ENCODE measurements at regions of chr2 and their contacts with region 1.

Region 1: DNA sequence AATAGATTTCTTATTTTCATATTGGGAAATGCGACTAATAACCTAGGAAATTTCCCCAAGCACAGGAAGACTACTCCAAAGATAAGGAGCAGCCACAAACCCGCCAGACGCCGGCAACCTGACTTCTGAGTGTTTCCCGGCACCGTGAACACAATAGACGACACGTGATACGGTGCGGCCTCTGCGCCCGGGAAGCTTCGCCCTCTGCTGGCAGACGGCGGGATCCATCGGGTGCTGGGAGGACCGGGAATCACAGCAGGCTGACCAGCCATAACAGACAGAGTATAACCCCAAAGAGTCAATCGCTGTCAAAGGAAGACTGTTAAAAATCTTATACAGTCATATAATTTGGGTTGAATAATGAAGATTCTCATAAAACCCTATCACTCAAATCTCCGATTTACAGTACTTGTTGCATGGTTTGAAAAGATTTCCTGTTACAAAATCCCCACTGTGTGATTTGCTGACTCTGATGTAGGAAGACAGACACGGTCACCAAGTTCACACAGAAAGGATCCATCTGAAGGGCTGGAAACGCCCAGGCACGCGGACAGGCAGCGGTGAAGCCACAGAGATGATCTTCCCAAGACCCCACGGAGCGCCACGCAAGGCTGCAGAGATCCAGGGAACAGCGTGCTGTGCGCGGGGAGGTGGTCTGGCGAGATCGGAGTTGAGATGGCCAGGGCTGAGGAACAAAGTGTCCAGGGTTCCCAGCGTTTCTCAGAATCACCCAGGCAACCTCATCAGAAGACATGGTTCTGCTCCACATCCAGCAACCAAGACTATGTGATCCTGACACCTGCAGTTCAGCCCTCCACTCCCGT is 73.8 kb downstream of the EIPR1 start:
- DNase-seq: peak; percentile 89
- H3K4me3 ChIP-seq: peak overlapping the region in 3 of 4 donors; percentile 19 to 38 (median 26)
- H3K27ac ChIP-seq: peak overlapping the region in 1 of 4 donors; percentile 21
- H3K4me1 ChIP-seq: peaks cover 0 to 7% (median 5%) of the 10 kb centered on the region in 4 donors
- H3K27me3 ChIP-seq: no peaks in the 10 kb centered on the region
- CTCF ChIP-seq: peak; percentile 70 to 96 (median 91)
- EP300 ChIP-seq: no peak
- POLR2A ChIP-seq: no peak

Region 2: GRCh38 chr2:1854729-1855547 is 1448.9 kb before region 1 on chr2:
- intact Hi-C with region 1: loop called (anchors 10 kb)
- DNase-seq: no peak
- H3K4me3 ChIP-seq: peak overlapping the region in 1 of 4 donors; percentile 8
- H3K27ac ChIP-seq: no peak overlapping the region
- H3K4me1 ChIP-seq: peaks cover 0 to 10% (median 0%) of the 10 kb centered on the region in 4 donors
- H3K27me3 ChIP-seq: peaks cover 0 to 22% (median 0%) of the 10 kb centered on the region in 3 donors
- CTCF ChIP-seq: peak in 3 of 4 experiments; percentile 9 to 33 (median 14)
- EP300 ChIP-seq: no peak
- POLR2A ChIP-seq: no peak

Region 3: DNA sequence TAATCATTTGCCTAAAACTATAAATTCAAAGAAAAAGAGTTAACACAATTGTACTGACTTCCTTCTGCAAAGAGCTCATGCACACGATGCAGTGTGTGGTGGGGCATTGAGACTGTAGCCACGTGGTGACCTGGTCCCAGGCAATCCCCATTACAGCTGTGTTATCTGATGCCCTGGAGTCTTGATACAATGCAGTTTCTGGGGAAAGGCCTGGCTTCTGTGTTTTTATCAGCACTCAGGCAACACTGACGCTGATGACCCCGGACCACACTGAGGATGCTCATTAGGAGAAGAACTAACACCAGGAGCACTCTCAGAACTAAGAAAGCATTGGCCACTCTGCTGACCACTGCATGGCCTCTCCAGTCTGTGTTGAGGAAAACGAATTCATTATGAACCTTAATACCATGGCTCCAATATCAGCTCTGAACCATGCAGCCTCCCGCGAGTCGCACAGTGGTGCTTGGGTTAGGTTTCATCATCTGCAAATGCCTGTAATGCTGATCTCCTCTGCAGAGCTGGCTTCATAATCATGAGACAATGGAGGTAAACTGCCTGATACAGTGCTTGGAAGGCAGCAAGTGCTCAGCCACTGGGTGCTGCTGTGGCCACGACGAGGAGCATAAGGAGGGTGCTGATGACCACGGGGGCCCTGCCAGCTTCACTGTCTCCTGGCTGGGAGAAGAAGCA is 1191.2 kb before region 1 on chr2:
- intact Hi-C with region 1: loop called (anchors 10 kb)
- DNase-seq: no peak
- H3K4me3 ChIP-seq: no peak overlapping the region
- H3K27ac ChIP-seq: no peak overlapping the region
- H3K4me1 ChIP-seq: peaks cover 0 to 17% (median 9%) of the 10 kb centered on the region in 4 donors
- H3K27me3 ChIP-seq: peaks cover 0 to 8% (median 0%) of the 10 kb centered on the region in 3 donors
- CTCF ChIP-seq: no peak
- EP300 ChIP-seq: no peak
- POLR2A ChIP-seq: no peak

Region 4: GRCh38 chr2:3025261-3025660 is 278.5 kb before region 1 on chr2:
- intact Hi-C with region 1: no loop called
- DNase-seq: no peak
- H3K4me3 ChIP-seq: no peak overlapping the region
- H3K27ac ChIP-seq: no peak overlapping the region
- H3K4me1 ChIP-seq: no peaks in the 10 kb centered on the region
- H3K27me3 ChIP-seq: no peaks in the 10 kb centered on the region
- CTCF ChIP-seq: no peak
- EP300 ChIP-seq: no peak
- POLR2A ChIP-seq: no peak

Region 5: DNA sequence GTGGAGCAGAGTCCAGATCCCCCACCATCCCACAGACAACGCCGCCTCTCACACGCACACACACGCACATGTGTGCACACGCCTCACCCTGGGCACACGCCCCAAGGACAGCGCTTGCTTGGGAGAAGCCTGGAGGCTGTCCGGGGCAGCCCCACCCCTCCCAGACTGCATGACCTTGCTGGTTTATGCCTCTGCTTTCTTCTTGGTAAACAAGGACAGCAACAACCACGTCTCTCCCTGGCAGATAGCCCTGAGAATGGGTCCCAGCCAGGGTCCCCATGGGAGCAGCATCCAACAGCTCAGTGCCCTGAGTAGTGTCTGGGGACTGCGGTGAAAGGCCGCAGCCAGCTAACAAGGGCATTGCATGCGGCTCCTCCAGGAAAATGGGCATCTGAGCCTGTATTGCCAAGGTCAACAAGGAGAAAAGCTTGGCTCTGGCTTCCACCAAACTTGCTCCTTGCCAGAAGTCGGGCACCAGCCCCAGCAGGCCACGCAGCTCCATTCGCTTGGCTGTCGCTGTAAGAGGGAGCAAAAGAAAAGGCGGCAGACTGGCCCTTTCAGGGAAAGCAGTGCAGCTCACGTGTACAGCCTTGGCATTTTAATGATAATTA is 160.7 kb before region 1 on chr2:
- intact Hi-C with region 1: no loop called
- DNase-seq: no peak
- H3K4me3 ChIP-seq: no peak overlapping the region
- H3K27ac ChIP-seq: no peak overlapping the region
- H3K4me1 ChIP-seq: no peaks in the 10 kb centered on the region
- H3K27me3 ChIP-seq: no peaks in the 10 kb centered on the region
- CTCF ChIP-seq: no peak
- EP300 ChIP-seq: no peak
- POLR2A ChIP-seq: no peak

Region 6: DNA sequence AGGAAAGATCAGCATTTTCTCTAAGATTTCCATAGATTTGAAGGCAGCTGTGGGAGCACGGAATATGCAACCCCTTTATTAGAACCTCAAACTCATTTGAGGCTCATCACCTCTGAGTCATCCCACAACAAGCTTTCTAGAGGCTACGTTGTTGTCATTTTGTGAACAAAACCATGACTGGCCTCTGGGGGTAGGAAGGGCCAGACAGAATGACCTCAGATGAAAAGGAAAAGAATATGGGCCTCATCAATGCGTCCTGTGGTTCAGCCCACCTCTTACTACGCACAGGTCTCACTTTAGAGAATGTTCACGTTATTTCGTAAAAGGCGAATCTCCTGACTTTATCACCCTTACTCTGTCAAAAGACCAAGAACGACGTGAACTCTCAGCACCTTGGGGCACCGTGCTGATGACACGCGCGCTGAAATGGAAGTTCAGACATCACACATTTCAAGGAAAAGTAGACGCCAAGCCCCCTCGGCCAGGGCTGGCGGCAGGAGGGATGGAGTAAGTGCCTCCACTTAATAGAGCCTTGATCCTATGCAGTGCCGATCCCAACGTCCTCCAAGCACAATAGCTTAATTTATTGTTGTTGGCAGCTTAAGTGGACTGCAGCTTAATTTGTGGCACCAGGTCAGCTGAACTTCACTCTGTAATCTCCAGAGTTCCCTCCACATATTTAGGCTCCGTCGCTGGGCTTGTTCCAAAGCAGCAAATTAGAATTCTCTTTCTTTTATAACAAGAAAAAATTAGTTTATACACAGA is 134.5 kb before region 1 on chr2:
- intact Hi-C with region 1: no loop called
- DNase-seq: peak; percentile 45
- H3K4me3 ChIP-seq: no peak overlapping the region
- H3K27ac ChIP-seq: no peak overlapping the region
- H3K4me1 ChIP-seq: no peaks in the 10 kb centered on the region
- H3K27me3 ChIP-seq: no peaks in the 10 kb centered on the region
- CTCF ChIP-seq: no peak
- EP300 ChIP-seq: no peak
- POLR2A ChIP-seq: no peak

Region 7: DNA sequence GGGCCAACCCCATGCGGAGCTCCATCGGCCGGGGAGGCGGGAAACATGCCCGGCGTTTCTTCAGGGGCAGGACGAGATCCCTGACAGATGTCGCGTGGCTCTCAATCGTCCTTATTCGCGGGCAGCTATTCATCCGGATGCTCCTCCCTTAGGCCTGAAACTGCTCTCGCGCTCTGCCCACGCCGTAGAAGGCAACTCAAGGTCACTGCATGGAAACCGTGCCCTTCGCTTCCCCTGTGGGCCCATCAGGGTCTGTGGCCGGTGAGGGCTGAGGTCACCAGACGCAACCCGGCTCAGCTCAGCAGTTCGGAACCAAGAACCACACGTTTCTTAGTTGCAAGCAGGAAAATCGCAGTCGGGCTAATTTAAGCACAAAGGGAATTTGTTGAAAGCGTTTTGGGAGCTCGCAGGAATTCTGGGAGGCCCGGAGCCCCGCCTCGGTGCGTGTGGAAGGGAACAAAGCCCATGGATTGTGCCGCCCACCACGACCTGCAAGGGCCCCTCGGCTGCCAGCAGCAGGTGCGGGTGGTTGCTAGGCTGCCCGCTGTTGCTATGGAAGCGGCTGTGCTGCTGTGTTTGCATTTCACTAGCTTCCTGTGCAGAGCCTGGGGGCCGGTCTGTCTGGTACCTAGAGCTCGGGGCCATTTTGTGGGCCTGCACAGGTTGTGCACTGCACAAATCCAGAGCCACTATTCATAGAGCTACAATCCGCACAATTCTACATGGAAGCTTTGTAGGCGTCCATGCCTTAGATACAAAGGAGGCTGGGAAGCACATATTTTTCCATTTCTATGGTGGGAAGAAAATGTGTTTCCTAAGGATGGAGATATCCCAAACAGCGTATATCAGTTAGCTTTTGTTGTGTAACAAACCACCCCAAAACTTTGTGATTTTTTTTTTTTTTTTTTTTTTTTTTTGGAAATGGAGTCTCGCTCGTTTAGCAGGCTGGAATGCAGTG is 348.2 kb after region 1 on chr2:
- intact Hi-C with region 1: loop called (anchors 5 kb)
- DNase-seq: no peak
- H3K4me3 ChIP-seq: peak overlapping the region in 3 of 4 donors; percentile 28 to 42 (median 41)
- H3K27ac ChIP-seq: peak overlapping the region; percentile 74 to 84 (median 79)
- H3K4me1 ChIP-seq: peaks cover 0 to 19% (median 14%) of the 10 kb centered on the region in 4 donors
- H3K27me3 ChIP-seq: no peaks in the 10 kb centered on the region
- CTCF ChIP-seq: no peak
- EP300 ChIP-seq: no peak
- POLR2A ChIP-seq: no peak

Region 8: DNA sequence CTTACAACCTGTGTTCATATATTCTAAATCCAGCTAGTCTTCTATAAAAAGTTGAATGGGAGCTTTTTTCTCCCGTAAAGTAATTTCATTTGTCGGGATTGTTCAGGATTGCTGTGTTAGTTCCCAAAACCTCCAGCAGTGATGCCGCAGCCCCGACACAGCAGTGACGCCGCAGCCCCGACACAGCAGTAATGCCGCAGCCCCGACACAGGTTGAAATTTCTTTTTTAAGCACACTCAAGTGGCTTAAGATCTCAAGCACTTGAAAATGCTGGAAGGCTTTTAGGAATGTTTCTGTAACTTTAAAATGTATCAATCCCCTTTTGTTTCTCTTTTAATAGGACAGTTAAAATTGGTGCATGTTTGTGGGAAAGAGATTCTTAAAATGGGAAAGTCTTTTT is 545.0 kb after region 1 on chr2:
- intact Hi-C with region 1: no loop called
- DNase-seq: no peak
- H3K4me3 ChIP-seq: no peak overlapping the region
- H3K27ac ChIP-seq: no peak overlapping the region
- H3K4me1 ChIP-seq: no peaks in the 10 kb centered on the region
- H3K27me3 ChIP-seq: no peaks in the 10 kb centered on the region
- CTCF ChIP-seq: no peak
- EP300 ChIP-seq: no peak
- POLR2A ChIP-seq: no peak